H1 (cell line): ENCODE measurements at regions of chr13 and their contacts with region 1.

Region 1: DNA sequence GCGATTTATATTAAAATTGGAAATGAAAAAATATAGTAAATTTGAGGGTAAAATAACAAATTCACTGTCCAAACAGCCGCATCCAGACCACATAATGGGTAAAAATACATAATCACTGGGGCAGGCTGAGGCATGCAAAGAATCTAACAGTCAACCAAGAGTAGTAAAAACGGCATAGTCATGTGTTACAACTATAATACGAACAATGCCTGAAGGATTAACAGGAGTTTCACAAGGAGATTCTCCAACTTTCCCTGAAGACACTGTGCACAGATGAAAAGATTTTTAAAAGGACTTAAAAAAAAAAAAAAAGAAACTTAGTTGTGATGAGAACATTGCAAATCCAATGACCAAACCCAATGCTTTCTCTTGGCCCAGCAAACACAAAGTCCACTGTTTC is 20.4 kb upstream of the ATXN8OS start:
- DNase-seq: no peak
- H3K4me3 ChIP-seq: no peak overlapping the region
- H3K27ac ChIP-seq: no peak overlapping the region
- H3K4me1 ChIP-seq: peaks cover 0 to 4% (median 2%) of the 10 kb centered on the region in 4 experiments; a peak in 4 of 7 replicates
- H3K27me3 ChIP-seq: no peaks in the 10 kb centered on the region
- CTCF ChIP-seq: no peak
- EP300 ChIP-seq: no peak
- POLR2A ChIP-seq: no peak
- RAD21 ChIP-seq: no peak

Region 2: GRCh38 chr13:70098669-70099068 is 11.4 kb after region 1 on chr13:
- CTCF ChIA-PET with region 1: interaction called, 18 read pairs
- POLR2A ChIA-PET with region 1: no interaction called
- DNase-seq: no peak
- H3K4me3 ChIP-seq: no peak overlapping the region
- H3K27ac ChIP-seq: no peak overlapping the region
- H3K4me1 ChIP-seq: no peaks in the 10 kb centered on the region
- H3K27me3 ChIP-seq: no peaks in the 10 kb centered on the region
- CTCF ChIP-seq: peak in 2 of 3 experiments; percentile 9 to 11; a peak in 2 of 4 replicates
- EP300 ChIP-seq: no peak
- POLR2A ChIP-seq: no peak
- RAD21 ChIP-seq: 0 out of 4 replicates have a peak, but pooled peaks of 1 of the 2 experiments have one; percentile 9